Ovary (tissue), 10 donors: ENCODE measurements at regions of chr5 and their contacts with region 1.

Region 1: DNA sequence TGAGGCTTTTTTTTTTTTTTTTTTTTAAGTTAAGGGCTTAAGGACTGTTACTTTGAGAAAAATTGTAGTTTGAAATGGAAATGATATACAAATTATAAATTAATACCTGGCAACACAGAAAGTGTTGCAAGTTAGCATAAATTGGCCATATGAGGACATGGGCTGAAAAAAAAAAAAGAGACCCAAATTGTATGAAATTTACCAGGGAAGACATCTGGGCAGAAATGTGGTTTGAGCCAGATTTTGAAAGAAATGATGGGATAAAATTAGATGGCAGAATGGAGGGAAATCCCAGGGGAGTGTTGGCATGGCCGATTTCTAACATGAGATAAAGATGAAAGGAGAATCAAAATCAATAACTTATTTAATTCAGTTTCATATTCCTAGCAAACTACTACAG is 472.1 kb downstream of the CTNND2 start:
- DNase-seq: no peak
- H3K4me3 ChIP-seq: no peak overlapping the region
- H3K27ac ChIP-seq: no peak overlapping the region
- H3K4me1 ChIP-seq: no peaks in the 10 kb centered on the region
- H3K27me3 ChIP-seq: no peaks in the 10 kb centered on the region
- CTCF ChIP-seq: no peak
- EP300 ChIP-seq: no peak
- POLR2A ChIP-seq: no peak

Region 2: GRCh38 chr5:11268891-11269290 is 163.2 kb before region 1 on chr5:
- intact Hi-C with region 1: no loop called
- DNase-seq: no peak
- H3K4me3 ChIP-seq: no peak overlapping the region
- H3K27ac ChIP-seq: no peak overlapping the region
- H3K4me1 ChIP-seq: no peaks in the 10 kb centered on the region
- H3K27me3 ChIP-seq: no peaks in the 10 kb centered on the region
- CTCF ChIP-seq: no peak
- EP300 ChIP-seq: no peak
- POLR2A ChIP-seq: no peak

Region 3: GRCh38 chr5:11322133-11322532 is 110.0 kb before region 1 on chr5:
- intact Hi-C with region 1: no loop called
- DNase-seq: no peak
- H3K4me3 ChIP-seq: no peak overlapping the region
- H3K27ac ChIP-seq: no peak overlapping the region
- H3K4me1 ChIP-seq: peaks cover 9% of the 10 kb centered on the region
- H3K27me3 ChIP-seq: no peaks in the 10 kb centered on the region
- CTCF ChIP-seq: no peak
- EP300 ChIP-seq: no peak
- POLR2A ChIP-seq: no peak

Region 4: GRCh38 chr5:11931638-11932037 is 499.5 kb after region 1 on chr5:
- intact Hi-C with region 1: loop called in 1 of 4 experiments (anchors 10 kb)
- DNase-seq: no peak
- H3K4me3 ChIP-seq: no peak overlapping the region
- H3K27ac ChIP-seq: no peak overlapping the region
- H3K4me1 ChIP-seq: no peaks in the 10 kb centered on the region
- H3K27me3 ChIP-seq: no peaks in the 10 kb centered on the region
- CTCF ChIP-seq: no peak
- EP300 ChIP-seq: no peak
- POLR2A ChIP-seq: no peak